ENCODE measurements at regions of chr11 and their contacts with region 1.

Region 1: GRCh38 chr11:73478738-73479347 is 102.6 kb downstream of the RELT start:
- DNase-seq: peak; percentile 28
- ATAC-seq: peak; percentile 88
- H3K4me3 Mint-ChIP-seq: no peak overlapping the region
- H3K27ac Mint-ChIP-seq: no peak overlapping the region
- H3K4me1 Mint-ChIP-seq: peaks cover 28% of the 10 kb centered on the region
- H3K27me3 Mint-ChIP-seq: no peaks in the 10 kb centered on the region
- CTCF ChIP-seq: peak; percentile 52

Region 2: GRCh38 chr11:73404048-73404447 is 74.8 kb before region 1 on chr11:
- CTCF ChIA-PET with region 1: interaction called, 10 read pairs
- POLR2A ChIA-PET with region 1: no interaction called
- DNase-seq: peak; percentile 66
- ATAC-seq: peak; percentile 91
- H3K4me3 Mint-ChIP-seq: no peak overlapping the region
- H3K27ac Mint-ChIP-seq: no peak overlapping the region
- H3K4me1 Mint-ChIP-seq: peaks cover 6% of the 10 kb centered on the region
- H3K27me3 Mint-ChIP-seq: no peaks in the 10 kb centered on the region
- CTCF ChIP-seq: no peak

Region 3: GRCh38 chr11:73453562-73453961 is 25.3 kb before region 1 on chr11:
- CTCF ChIA-PET with region 1: interaction called, 14 read pairs
- POLR2A ChIA-PET with region 1: no interaction called
- DNase-seq: no peak
- ATAC-seq: no peak
- H3K4me3 Mint-ChIP-seq: no peak overlapping the region
- H3K27ac Mint-ChIP-seq: no peak overlapping the region
- H3K4me1 Mint-ChIP-seq: peaks cover 11% of the 10 kb centered on the region
- H3K27me3 Mint-ChIP-seq: no peaks in the 10 kb centered on the region
- CTCF ChIP-seq: no peak

Region 4: GRCh38 chr11:73493956-73494598 is 15.2 kb after region 1 on chr11:
- CTCF ChIA-PET with region 1: interaction called, 16 read pairs
- POLR2A ChIA-PET with region 1: no interaction called
- DNase-seq: peak; percentile 21
- ATAC-seq: peak; percentile 92
- H3K4me3 Mint-ChIP-seq: no peak overlapping the region
- H3K27ac Mint-ChIP-seq: peak overlapping the region; percentile 64
- H3K4me1 Mint-ChIP-seq: peaks cover 25% of the 10 kb centered on the region
- H3K27me3 Mint-ChIP-seq: no peaks in the 10 kb centered on the region
- CTCF ChIP-seq: no peak

Region 5: DNA sequence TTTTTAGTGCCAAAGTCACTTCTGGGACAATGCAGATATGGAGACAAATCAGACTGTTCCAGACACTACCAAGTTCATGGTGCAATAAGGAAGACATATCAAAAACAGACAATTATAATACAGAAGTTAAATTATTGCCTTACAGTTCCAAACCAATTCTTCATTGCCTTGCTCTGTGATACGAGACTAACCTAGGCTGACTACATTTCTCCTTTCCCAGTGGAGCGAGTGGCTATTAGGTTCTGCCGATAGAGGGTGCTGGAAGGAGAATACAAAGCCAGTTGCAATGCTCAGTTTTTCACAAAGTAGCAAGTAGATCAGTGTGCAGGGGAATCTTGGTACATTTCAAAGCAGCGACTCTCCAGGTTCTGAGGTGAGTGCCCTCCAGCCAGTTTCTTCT is 51.3 kb after region 1 on chr11:
- CTCF ChIA-PET with region 1: interaction called, 18 read pairs
- POLR2A ChIA-PET with region 1: no interaction called
- DNase-seq: peak; percentile 47
- ATAC-seq: peak; percentile 79
- H3K4me3 Mint-ChIP-seq: no peak overlapping the region
- H3K27ac Mint-ChIP-seq: peak overlapping the region; percentile 60
- H3K4me1 Mint-ChIP-seq: peaks cover 79% of the 10 kb centered on the region
- H3K27me3 Mint-ChIP-seq: no peaks in the 10 kb centered on the region
- CTCF ChIP-seq: no peak

Region 6: GRCh38 chr11:73566422-73566821 is 87.6 kb after region 1 on chr11:
- CTCF ChIA-PET with region 1: interaction called, 11 read pairs
- POLR2A ChIA-PET with region 1: no interaction called
- DNase-seq: no peak
- ATAC-seq: no peak
- H3K4me3 Mint-ChIP-seq: no peak overlapping the region
- H3K27ac Mint-ChIP-seq: no peak overlapping the region
- H3K4me1 Mint-ChIP-seq: peaks cover 38% of the 10 kb centered on the region
- H3K27me3 Mint-ChIP-seq: no peaks in the 10 kb centered on the region
- CTCF ChIP-seq: no peak

Region 7: DNA sequence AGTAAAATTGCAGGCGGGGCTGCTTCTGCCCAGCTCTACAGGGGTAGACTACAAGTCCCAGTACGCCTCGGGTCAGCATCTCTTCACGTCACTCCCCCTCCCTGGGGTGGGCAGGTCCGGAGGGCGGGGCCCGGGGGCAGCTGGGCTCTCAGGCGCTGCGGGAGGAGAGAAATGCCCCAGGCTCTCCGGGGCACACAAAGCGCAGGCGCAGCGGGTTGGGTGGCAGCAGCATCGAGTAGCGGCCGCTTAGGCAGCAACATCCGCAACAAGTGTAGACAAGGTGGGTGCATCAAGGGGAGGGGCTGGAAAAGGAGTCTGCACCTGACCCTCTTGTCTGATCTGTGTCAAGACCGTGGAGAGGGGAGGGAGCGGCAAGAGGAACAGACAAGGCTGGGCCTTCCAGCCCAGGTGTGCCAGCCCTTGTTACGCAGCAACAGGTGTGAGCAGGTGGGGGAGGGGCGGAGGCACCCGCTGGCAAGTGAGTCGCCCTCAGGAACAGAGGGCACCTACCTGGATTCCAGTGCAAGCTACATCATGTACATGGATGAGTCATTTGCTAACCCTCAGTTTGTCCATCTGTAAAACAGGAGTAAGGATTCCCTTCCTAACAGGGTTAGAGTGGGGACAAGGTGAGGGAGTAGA is 168.7 kb after region 1 on chr11:
- CTCF ChIA-PET with region 1: interaction called, 14 read pairs
- POLR2A ChIA-PET with region 1: no interaction called
- DNase-seq: peak; percentile 96
- ATAC-seq: peak; percentile 78
- H3K4me3 Mint-ChIP-seq: peak overlapping the region; percentile 87
- H3K27ac Mint-ChIP-seq: 0 out of 2 replicates have a peak overlapping the region, but pooled peaks have one; percentile 27
- H3K4me1 Mint-ChIP-seq: peaks cover 45% of the 10 kb centered on the region
- H3K27me3 Mint-ChIP-seq: peaks cover 96% of the 10 kb centered on the region
- CTCF ChIP-seq: no peak